Panc1 (cell line): ENCODE measurements at regions of chr5 and their contacts with region 1.

Region 1: GRCh38 chr5:109688630-109688970 is 1.1 kb upstream of the MAN2A1 start:
- DNase-seq: no peak
- ATAC-seq: no peak
- H3K4me3 ChIP-seq: peak overlapping the region; percentile 65 to 90
- H3K27ac ChIP-seq: peak overlapping the region; percentile 90
- H3K4me1 ChIP-seq: peaks cover 14% of the 10 kb centered on the region
- H3K27me3 ChIP-seq: no peaks in the 10 kb centered on the region
- CTCF ChIP-seq: peak; percentile 66

Region 2: GRCh38 chr5:109865637-109866036 is 177.0 kb after region 1 on chr5:
- CTCF ChIA-PET with region 1: interaction called, 10 read pairs
- POLR2A ChIA-PET with region 1: no interaction called
- in situ Hi-C with region 1: no loop called
- intact Hi-C with region 1: no loop called
- DNase-seq: peak; percentile 83
- ATAC-seq: peak; percentile 73
- H3K4me3 ChIP-seq: no peak overlapping the region
- H3K27ac ChIP-seq: no peak overlapping the region
- H3K4me1 ChIP-seq: no peaks in the 10 kb centered on the region
- H3K27me3 ChIP-seq: no peaks in the 10 kb centered on the region
- CTCF ChIP-seq: no peak